Dendritic cell treated with granulocyte-macrophage colony-stimulating factor and Interleukin-4, amounts not matched to agents 40 ng/mL and 50 ng/mL, for 4 days (primary cell): ENCODE measurements at regions of chr14 and their contacts with region 1.

Region 1: GRCh38 chr14:92456215-92457015 is 57.2 kb upstream of the RIN3 start:
- H3K4me3 Mint-ChIP-seq: no peak overlapping the region
- H3K27ac Mint-ChIP-seq: no peak overlapping the region
- H3K4me1 Mint-ChIP-seq: peaks cover 46% of the 10 kb centered on the region
- H3K27me3 Mint-ChIP-seq: peaks cover 2% of the 10 kb centered on the region

Region 2: GRCh38 chr14:92135267-92135666 is 321.1 kb before region 1 on chr14:
- intact Hi-C with region 1: loop called (anchors 2 kb)
- H3K4me3 Mint-ChIP-seq: no peak overlapping the region
- H3K27ac Mint-ChIP-seq: no peak overlapping the region
- H3K4me1 Mint-ChIP-seq: peaks cover under 1% of the 10 kb centered on the region
- H3K27me3 Mint-ChIP-seq: no peaks in the 10 kb centered on the region

Region 3: DNA sequence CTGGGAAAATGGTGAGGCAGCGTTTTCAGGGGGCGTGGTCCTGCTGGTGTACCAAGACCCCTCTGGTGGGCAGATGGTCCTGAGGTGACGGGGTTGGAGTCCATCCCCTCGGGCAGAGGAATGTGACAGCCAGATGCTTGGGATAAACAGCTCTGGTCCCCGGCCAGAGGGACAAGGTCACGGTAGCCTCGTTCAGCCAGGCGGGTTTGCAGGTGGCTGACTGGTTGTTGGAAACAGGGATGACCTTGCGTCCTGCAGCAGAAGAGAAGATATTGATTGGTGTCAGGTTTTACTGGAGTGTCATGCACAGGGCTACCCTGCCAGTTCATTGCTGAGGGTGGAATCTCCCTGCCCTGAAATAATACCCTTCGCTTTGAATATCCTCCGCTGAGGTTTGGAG is 90.2 kb before region 1 on chr14:
- intact Hi-C with region 1: loop called (anchors 5 kb)
- H3K4me3 Mint-ChIP-seq: no peak overlapping the region
- H3K27ac Mint-ChIP-seq: no peak overlapping the region
- H3K4me1 Mint-ChIP-seq: peaks cover 45% of the 10 kb centered on the region
- H3K27me3 Mint-ChIP-seq: peaks cover 39% of the 10 kb centered on the region

Region 4: DNA sequence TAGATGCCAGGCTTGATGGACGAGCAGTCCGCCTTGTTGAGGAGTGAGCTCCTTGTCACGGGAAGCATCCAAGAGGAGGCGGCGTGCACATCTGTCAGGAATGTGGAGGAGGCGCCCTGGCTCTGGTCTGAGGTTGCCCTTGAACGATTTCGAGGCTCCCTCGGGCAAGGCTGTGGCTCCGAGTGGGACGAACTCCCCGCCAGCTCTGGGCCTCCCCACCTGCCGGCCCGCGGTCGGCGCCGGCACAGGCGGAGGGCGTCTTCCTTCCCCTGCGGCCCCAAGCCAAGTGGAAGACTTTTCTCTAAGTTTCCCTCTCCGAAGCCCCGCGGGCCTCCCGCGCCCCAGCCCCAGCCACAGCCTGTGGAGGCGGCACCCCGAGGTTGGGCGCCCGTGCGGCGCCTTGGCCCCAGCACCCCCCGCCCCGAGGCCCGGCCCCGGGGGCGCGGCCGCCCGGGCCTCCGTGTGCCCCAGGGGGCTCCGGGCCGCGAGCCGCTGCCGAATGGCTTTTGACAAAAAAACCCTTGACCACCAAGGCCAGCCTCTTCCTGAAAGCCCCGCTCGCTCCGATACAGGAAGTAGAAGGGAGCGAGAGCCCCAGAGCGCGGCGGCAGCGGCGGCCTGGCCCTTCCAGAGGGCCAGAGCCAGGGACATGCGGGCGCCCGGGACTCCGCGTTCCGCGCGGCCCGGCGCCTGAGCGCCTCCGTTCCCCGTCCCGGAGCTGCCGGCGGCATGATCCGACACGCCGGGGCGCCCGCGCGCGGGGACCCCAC is 57.0 kb after region 1 on chr14 and contains the start of gene RIN3:
- intact Hi-C with region 1: loop called (anchors 5 kb)
- H3K4me3 Mint-ChIP-seq: peak within 1 kb of the TSS; percentile 86
- H3K27ac Mint-ChIP-seq: peak within 1 kb of the TSS; percentile 94
- H3K4me1 Mint-ChIP-seq: peaks cover 67% of the 10 kb centered on the region
- H3K27me3 Mint-ChIP-seq: peaks cover 13% of the 10 kb centered on the region

Region 5: GRCh38 chr14:92651106-92651757 is 194.8 kb after region 1 on chr14:
- intact Hi-C with region 1: loop called (anchors 10 kb)
- H3K4me3 Mint-ChIP-seq: peak overlapping the region; percentile 99
- H3K27ac Mint-ChIP-seq: peak overlapping the region; percentile 91
- H3K4me1 Mint-ChIP-seq: peaks cover 86% of the 10 kb centered on the region
- H3K27me3 Mint-ChIP-seq: no peaks in the 10 kb centered on the region